ENCODE measurements at regions of chr11 and their contacts with region 1.

Region 1: GRCh38 chr11:45102810-45103621 is 43.4 kb upstream of the PRDM11 start:
- DNase-seq: peak; percentile 63
- H3K4me3 ChIP-seq: peak overlapping the region in 1 of 3 experiments; percentile 7
- H3K27ac ChIP-seq: no peak overlapping the region
- H3K4me1 ChIP-seq: peaks cover 13% of the 10 kb centered on the region
- H3K27me3 ChIP-seq: no peaks in the 10 kb centered on the region
- CTCF ChIP-seq: peak; percentile 88 to 97

Region 2: DNA sequence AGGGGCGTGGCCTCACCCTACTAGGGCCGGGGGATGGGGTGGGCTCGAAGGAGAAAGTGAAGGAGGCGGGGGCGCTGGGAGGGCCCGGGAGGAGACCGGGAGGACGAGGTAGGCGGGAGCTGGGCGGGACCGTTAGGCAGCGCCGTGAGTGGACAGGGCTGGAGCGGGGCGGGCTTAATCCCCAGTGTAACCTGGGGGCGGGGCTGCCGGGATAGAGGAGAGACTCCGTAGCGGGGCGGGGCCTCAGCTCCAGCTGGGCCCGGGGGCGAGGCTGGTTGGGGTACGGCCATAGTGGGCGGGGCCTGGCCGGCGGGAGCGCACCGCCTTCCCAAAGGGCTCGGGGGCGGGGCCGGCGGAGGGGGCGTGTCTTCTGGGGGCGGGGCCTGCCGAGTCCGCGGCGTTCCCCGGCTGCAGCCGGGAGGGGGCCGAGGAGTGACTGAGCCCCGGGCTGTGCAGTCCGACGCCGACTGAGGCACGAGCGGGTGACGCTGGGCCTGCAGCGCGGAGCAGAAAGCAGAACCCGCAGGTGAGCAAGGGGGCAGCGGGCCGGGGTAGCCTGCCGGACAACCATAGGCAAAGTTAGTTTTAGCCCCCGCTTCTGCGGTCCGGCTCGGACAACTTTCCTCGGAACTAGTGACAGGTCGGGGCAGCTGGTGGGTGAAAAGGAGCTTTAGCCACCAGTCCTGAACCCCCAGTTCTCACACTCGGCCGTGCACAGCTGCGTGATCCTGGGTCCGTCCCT is 537.6 kb before region 1 on chr11 and contains the start of gene CD82:
- CTCF ChIA-PET with region 1: no interaction called
- dilution Hi-C with region 1: no loop called
- in situ Hi-C with region 1: no loop called
- intact Hi-C with region 1: loop called (anchors 10 kb)
- DNase-seq: peak; percentile 98
- H3K4me3 ChIP-seq: peak within 1 kb of the TSS; percentile 40 to 83 (median 69)
- H3K27ac ChIP-seq: peak within 1 kb of the TSS; percentile 95
- H3K4me1 ChIP-seq: peaks cover 83% of the 10 kb centered on the region
- H3K27me3 ChIP-seq: no peaks in the 10 kb centered on the region
- CTCF ChIP-seq: peak in 1 of 2 donors; percentile 35
- total RNA-seq, gene CD82: 38.8 to 309 TPM

Region 3: GRCh38 chr11:44927174-44927661 is 175.8 kb before region 1 on chr11:
- CTCF ChIA-PET with region 1: interaction called, 4 read pairs
- dilution Hi-C with region 1: no loop called
- in situ Hi-C with region 1: loop called in 1 of 2 experiments (anchors 5 kb)
- intact Hi-C with region 1: loop called (anchors 1 kb)
- DNase-seq: peak; percentile 32
- H3K4me3 ChIP-seq: no peak overlapping the region
- H3K27ac ChIP-seq: no peak overlapping the region
- H3K4me1 ChIP-seq: no peaks in the 10 kb centered on the region
- H3K27me3 ChIP-seq: peaks cover 5% of the 10 kb centered on the region
- CTCF ChIP-seq: peak; percentile 75 to 87

Region 4: GRCh38 chr11:45025716-45026492 is 77.1 kb before region 1 on chr11:
- CTCF ChIA-PET with region 1: no interaction called
- dilution Hi-C with region 1: no loop called
- in situ Hi-C with region 1: no loop called
- intact Hi-C with region 1: no loop called
- DNase-seq: no peak
- H3K4me3 ChIP-seq: no peak overlapping the region
- H3K27ac ChIP-seq: no peak overlapping the region
- H3K4me1 ChIP-seq: no peaks in the 10 kb centered on the region
- H3K27me3 ChIP-seq: no peaks in the 10 kb centered on the region
- CTCF ChIP-seq: no peak

Region 5: GRCh38 chr11:45045683-45046471 is 57.1 kb before region 1 on chr11:
- CTCF ChIA-PET with region 1: no interaction called
- dilution Hi-C with region 1: no loop called
- in situ Hi-C with region 1: loop called in 1 of 2 experiments (anchors 10 kb)
- intact Hi-C with region 1: no loop called
- DNase-seq: peak; percentile 75
- H3K4me3 ChIP-seq: no peak overlapping the region
- H3K27ac ChIP-seq: peak overlapping the region; percentile 67
- H3K4me1 ChIP-seq: peaks cover 19% of the 10 kb centered on the region
- H3K27me3 ChIP-seq: no peaks in the 10 kb centered on the region
- CTCF ChIP-seq: peak in 1 of 2 donors; percentile 8

Region 6: DNA sequence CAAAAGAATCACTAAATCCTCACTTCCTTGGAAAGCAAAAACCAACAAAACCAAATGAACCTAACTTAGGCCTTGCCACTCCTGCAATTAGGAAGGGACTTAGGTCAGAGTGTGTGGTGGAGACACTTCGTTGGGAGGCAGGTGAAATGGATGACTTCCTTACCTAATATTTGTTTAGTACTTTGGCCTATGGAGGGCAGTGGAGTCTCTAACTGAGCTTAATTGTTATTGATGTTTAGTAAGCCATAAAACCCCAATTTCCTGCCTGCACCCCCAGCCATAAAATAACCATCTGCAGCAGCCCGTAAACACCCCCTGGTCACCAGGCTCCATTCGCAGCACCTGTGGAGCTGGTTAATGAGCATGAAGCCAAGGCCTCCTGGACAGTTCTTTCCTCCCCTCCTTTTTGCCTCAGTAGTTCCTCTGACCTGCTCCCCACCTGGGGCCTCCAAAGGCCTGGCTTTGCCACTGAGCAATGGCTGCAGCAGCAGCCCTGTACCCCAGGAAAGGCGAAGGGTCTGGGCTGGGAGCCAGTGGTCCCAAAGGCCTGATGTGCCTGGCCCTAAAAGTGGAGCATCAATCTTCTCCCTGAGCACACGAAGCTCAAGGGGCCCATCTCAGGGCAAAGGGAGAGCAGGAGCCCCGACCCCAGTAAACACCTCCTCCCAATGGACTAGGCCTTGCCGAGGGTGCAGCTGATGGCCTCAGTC is 198.7 kb after region 1 on chr11:
- CTCF ChIA-PET with region 1: no interaction called
- dilution Hi-C with region 1: no loop called
- in situ Hi-C with region 1: loop called in 1 of 2 experiments (anchors 10 kb)
- intact Hi-C with region 1: no loop called
- DNase-seq: no peak
- H3K4me3 ChIP-seq: no peak overlapping the region
- H3K27ac ChIP-seq: no peak overlapping the region
- H3K4me1 ChIP-seq: no peaks in the 10 kb centered on the region
- H3K27me3 ChIP-seq: peaks cover 1% of the 10 kb centered on the region
- CTCF ChIP-seq: no peak

Measured in mammary epithelial cell (primary cell).